Natural killer cell (primary cell): ENCODE measurements at regions of chr15 and their contacts with region 1.

Region 1: GRCh38 chr15:42273102-42273899 is at the starts of genes GANC and TMEM87A:
- DNase-seq: peak; percentile 90 to 99
- ATAC-seq: peak; percentile 93 to 98 (median 94)
- H3K4me3 ChIP-seq: peak within 1 kb of the TSS; percentile 96
- H3K4me3 Mint-ChIP-seq: peak within 1 kb of the TSS; percentile 91
- H3K27ac ChIP-seq: peak within 1 kb of the TSS; percentile 92
- H3K27ac Mint-ChIP-seq: peak within 1 kb of the TSS; percentile 95 to 99
- H3K4me1 ChIP-seq: peaks cover 13% of the 10 kb centered on the region
- H3K4me1 Mint-ChIP-seq: peaks cover 49 to 56% of the 10 kb centered on the region in 2 donors
- H3K27me3 ChIP-seq: no peaks in the 10 kb centered on the region
- H3K27me3 Mint-ChIP-seq: no peaks in the 10 kb centered on the region
- CTCF ChIP-seq: no peak
- total RNA-seq, gene GANC: 23.5 to 31.3 (median 24.3) TPM
- total RNA-seq, gene TMEM87A: 70.8 to 76.4 (median 73.7) TPM

Region 2: DNA sequence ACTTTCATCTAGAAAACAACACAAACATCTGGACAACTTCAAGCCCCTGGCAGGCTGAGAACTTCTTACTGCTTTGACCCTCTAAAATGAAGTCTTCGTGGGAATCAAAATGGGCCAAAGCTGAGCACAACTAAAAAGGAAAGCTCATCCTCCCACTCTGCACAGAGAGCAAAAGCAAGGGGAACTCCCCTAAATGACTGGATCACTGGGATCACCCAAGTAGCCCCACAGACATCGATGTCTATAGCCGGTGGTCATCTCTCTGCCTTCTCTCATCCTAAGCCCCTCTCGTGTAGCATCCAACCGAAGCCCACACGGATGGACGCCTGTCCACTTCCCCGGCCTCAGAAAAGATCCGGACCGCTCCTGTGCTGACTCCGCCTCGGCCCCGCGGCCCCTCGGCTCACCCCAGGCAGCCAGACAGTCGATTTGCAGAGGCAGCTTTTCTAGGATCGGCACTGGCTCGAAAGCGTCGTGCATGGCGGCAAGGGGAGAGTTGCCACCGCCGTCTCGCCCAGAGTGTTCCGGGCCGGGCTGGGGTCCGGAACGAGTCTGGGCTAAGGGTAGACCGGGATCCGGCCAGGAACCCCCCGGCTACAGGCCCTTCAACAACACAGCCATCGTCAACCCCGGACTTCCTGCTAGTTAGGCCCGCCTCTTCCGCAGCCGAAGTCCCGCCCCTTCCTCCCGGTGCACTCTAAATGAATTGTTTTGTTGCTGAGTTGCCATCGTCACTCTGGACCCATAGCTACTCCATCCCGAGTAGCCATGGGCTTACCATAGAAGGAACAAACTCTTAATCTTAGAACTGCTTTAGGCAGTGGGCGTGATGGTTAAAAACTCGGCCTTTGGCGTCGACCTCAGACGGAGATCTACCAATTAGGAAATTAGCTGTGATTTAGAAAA is 65.4 kb before region 1 on chr15 and contains the start of gene VPS39:
- intact Hi-C with region 1: loop called (anchors 1 kb)
- DNase-seq: peak; percentile 80 to 90
- ATAC-seq: peak; percentile 97 to 98 (median 97)
- H3K4me3 ChIP-seq: peak within 1 kb of the TSS; percentile 76
- H3K4me3 Mint-ChIP-seq: peak within 1 kb of the TSS; percentile 96
- H3K27ac ChIP-seq: peak within 1 kb of the TSS; percentile 64
- H3K27ac Mint-ChIP-seq: peak within 1 kb of the TSS; percentile 90 to 97
- H3K4me1 ChIP-seq: peaks cover 11% of the 10 kb centered on the region
- H3K4me1 Mint-ChIP-seq: peaks cover 28 to 45% of the 10 kb centered on the region in 2 donors
- H3K27me3 ChIP-seq: no peaks in the 10 kb centered on the region
- H3K27me3 Mint-ChIP-seq: no peaks in the 10 kb centered on the region
- CTCF ChIP-seq: no peak
- total RNA-seq, gene VPS39: 104 to 115 (median 112) TPM

Region 3: GRCh38 chr15:42474827-42475226 is 201.5 kb after region 1 on chr15:
- intact Hi-C with region 1: loop called (anchors 5 kb)
- DNase-seq: no peak
- ATAC-seq: no peak
- H3K4me3 ChIP-seq: no peak overlapping the region
- H3K4me3 Mint-ChIP-seq: no peak overlapping the region
- H3K27ac ChIP-seq: no peak overlapping the region
- H3K27ac Mint-ChIP-seq: peak overlapping the region in 1 of 2 donors; percentile 24
- H3K4me1 ChIP-seq: peaks cover 3% of the 10 kb centered on the region
- H3K4me1 Mint-ChIP-seq: peaks cover 0 to 11% of the 10 kb centered on the region in 2 donors
- H3K27me3 ChIP-seq: no peaks in the 10 kb centered on the region
- H3K27me3 Mint-ChIP-seq: no peaks in the 10 kb centered on the region
- CTCF ChIP-seq: no peak

Region 4: DNA sequence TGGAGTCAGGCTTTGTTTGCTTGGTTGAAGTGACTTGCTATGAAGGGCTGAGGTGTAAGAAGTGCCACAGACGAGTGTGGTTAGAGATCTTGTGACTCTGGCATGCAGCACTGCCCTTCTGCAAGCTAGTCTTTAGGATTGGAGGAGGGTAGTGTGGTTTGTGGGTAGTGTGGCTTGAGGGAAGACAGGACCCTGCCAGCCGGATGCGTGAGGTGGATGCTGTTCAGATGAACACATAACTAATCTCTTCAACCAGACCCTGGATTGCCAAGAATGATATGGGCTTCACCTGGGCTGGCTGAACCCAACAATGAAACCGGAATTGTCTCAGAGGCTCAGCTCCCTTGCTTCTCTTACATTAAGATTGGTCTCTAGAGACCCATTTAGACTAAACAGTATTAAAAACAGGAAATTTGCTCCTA is 334.8 kb after region 1 on chr15:
- intact Hi-C with region 1: no loop called
- DNase-seq: peak; percentile 61 to 64
- ATAC-seq: peak; percentile 58 to 83 (median 77)
- H3K4me3 ChIP-seq: no peak overlapping the region
- H3K4me3 Mint-ChIP-seq: peak overlapping the region; percentile 84
- H3K27ac ChIP-seq: peak overlapping the region; percentile 42
- H3K27ac Mint-ChIP-seq: peak overlapping the region; percentile 76 to 86
- H3K4me1 ChIP-seq: peaks cover 43% of the 10 kb centered on the region
- H3K4me1 Mint-ChIP-seq: peaks cover 46 to 50% of the 10 kb centered on the region in 2 donors
- H3K27me3 ChIP-seq: no peaks in the 10 kb centered on the region
- H3K27me3 Mint-ChIP-seq: no peaks in the 10 kb centered on the region
- CTCF ChIP-seq: no peak